H1 (cell line): ENCODE measurements at regions of chr6 and their contacts with region 1.

Region 1: DNA sequence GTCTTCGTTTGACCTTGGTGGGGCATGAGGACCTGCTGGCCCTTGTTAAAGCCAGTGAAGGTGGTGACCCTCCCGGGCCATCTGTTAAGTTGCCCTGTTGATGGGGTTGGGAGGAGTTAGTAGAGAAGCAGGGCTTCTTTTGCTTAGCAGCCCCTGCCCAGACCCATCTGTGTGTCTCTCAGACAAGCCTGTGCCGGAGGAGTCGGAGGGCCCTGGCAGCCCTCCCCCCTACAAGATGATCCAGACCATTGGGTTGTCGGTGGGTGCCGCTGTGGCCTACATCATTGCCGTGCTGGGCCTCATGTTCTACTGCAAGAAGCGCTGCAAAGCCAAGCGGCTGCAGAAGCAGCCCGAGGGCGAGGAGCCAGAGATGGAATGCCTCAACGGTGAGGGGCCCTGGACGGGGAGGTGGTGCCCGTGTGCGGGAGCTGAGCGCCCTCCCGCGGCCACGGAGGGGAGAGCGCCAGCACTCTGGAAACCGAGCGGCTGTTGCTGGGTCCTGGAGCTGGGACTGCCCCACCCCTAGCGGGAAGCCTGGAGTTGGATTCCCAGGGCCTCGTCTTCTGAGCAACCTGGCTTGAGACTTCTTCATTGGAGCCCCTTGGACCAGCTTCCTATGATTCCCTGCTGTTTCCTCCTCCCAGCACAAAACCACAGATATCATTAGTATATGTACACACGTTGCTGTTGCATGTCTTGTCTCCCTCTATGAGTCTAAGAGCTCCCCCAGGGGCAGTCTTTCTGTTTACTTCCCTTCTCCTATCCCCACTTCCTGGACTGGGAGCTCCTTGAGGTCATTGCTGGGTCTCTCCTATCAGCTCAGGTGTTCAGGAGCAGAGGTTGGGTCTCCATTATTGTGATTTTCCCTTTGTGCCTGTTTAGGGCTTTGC is 27.6 kb upstream of the SRF start:
- DNase-seq: peak; percentile 89 to 96
- H3K4me3 ChIP-seq: no peak overlapping the region; a peak in 1 of 8 replicates
- H3K27ac ChIP-seq: no peak overlapping the region
- H3K4me1 ChIP-seq: peaks cover 0 to 6% (median 3%) of the 10 kb centered on the region in 4 experiments; a peak in 3 of 7 replicates
- H3K27me3 ChIP-seq: no peaks in the 10 kb centered on the region
- CTCF ChIP-seq: peak; percentile 92 to 99 (median 98)
- EP300 ChIP-seq: no peak; a peak in 1 of 3 replicates
- POLR2A ChIP-seq: 0 out of 3 replicates have a peak, but pooled peaks of 1 of the 2 experiments have one; percentile 36
- RAD21 ChIP-seq: peak; percentile 99 to 100

Region 2: GRCh38 chr6:42963855-42964605 is 179.4 kb before region 1 on chr6:
- CTCF ChIA-PET with region 1: interaction called, 18 read pairs
- POLR2A ChIA-PET with region 1: no interaction called
- DNase-seq: peak; percentile 64 to 82
- H3K4me3 ChIP-seq: no peak overlapping the region
- H3K27ac ChIP-seq: no peak overlapping the region
- H3K4me1 ChIP-seq: peaks cover 0 to 10% (median 6%) of the 10 kb centered on the region in 4 experiments; a peak in 5 of 7 replicates
- H3K27me3 ChIP-seq: peaks cover 0 to 13% (median 10%) of the 10 kb centered on the region in 4 experiments; a peak in 5 of 7 replicates
- CTCF ChIP-seq: peak in 2 of 3 experiments; percentile 50 to 63; a peak in 3 of 4 replicates
- EP300 ChIP-seq: no peak
- POLR2A ChIP-seq: no peak
- RAD21 ChIP-seq: peak; percentile 69 to 79

Region 3: GRCh38 chr6:43053545-43054205 is 89.8 kb before region 1 on chr6 and contains the start of gene CUL7:
- CTCF ChIA-PET with region 1: interaction called, 20 read pairs
- POLR2A ChIA-PET with region 1: interaction called, 10 read pairs
- DNase-seq: peak; percentile 73 to 88
- H3K4me3 ChIP-seq: peak within 1 kb of the TSS; percentile 72 to 91 (median 78)
- H3K27ac ChIP-seq: peak within 1 kb of the TSS; percentile 87
- H3K4me1 ChIP-seq: peaks cover 4 to 15% (median 7%) of the 10 kb centered on the region in 4 experiments; a peak in 6 of 7 replicates
- H3K27me3 ChIP-seq: no peaks in the 10 kb centered on the region
- CTCF ChIP-seq: no peak
- EP300 ChIP-seq: no peak
- POLR2A ChIP-seq: peak in 1 of 2 experiments; percentile 92; a peak in 2 of 3 replicates
- RAD21 ChIP-seq: 0 out of 4 replicates have a peak, but pooled peaks of 1 of the 2 experiments have one; percentile 0
- total RNA-seq, gene CUL7: 10.8 and 11.4 TPM in 2 replicates

Region 4: GRCh38 chr6:43070028-43070632 is 73.3 kb before region 1 on chr6:
- CTCF ChIA-PET with region 1: interaction called, 31 read pairs
- POLR2A ChIA-PET with region 1: interaction called, 30 read pairs
- DNase-seq: no peak
- H3K4me3 ChIP-seq: no peak overlapping the region
- H3K27ac ChIP-seq: no peak overlapping the region
- H3K4me1 ChIP-seq: peaks cover 0 to 8% (median 3%) of the 10 kb centered on the region in 4 experiments; a peak in 4 of 7 replicates
- H3K27me3 ChIP-seq: no peaks in the 10 kb centered on the region
- CTCF ChIP-seq: peak; percentile 25 to 73 (median 48)
- EP300 ChIP-seq: no peak
- POLR2A ChIP-seq: no peak
- RAD21 ChIP-seq: peak; percentile 81

Region 5: GRCh38 chr6:43089874-43090558 is 53.5 kb before region 1 on chr6:
- CTCF ChIA-PET with region 1: interaction called, 14 read pairs
- POLR2A ChIA-PET with region 1: interaction called, 3 read pairs
- DNase-seq: peak in 1 of 2 experiments; percentile 57
- H3K4me3 ChIP-seq: peak overlapping the region; percentile 19 to 46 (median 31); a peak in 7 of 8 replicates
- H3K27ac ChIP-seq: peak overlapping the region; percentile 81
- H3K4me1 ChIP-seq: peaks cover 18 to 33% (median 26%) of the 10 kb centered on the region in 4 experiments
- H3K27me3 ChIP-seq: no peaks in the 10 kb centered on the region
- CTCF ChIP-seq: no peak
- EP300 ChIP-seq: no peak
- POLR2A ChIP-seq: no peak
- RAD21 ChIP-seq: no peak

Region 6: DNA sequence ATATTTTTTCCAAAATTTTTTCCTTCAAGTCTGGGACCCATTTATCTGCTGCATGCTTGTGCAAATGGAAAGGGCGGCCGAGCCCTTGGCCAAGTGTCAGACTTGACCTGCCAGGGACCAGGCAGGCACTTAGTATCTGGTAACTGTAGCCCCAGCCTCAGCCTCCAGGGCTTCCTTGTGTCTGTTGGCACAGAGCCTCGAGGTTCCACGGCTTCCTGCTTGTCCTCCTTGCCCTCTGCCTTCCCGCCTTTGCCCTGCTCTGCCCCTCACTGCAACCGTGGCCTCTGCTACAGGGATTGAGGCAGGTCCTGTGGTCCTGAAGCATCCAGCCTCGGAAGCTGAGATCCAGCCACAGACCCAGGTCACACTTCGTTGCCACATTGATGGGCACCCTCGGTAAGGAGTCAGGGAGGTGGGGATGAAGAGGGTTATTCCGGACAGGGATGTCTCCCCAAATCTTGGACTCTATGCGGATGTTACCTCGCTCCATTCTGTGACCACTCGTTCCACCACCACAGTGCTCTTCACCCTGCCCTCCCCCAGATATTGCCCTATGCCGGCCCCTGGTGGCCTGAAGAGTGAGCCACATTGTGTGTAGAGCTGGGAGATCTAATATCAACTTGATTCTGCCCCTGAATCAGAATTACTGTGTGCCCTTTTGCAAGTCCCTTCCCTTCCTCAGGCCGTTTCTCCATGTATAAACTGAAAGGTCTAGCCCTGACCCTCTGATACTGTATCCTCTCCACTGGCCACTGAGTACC is 13.9 kb before region 1 on chr6:
- CTCF ChIA-PET with region 1: interaction called, 27 read pairs
- POLR2A ChIA-PET with region 1: interaction called, 7 read pairs
- DNase-seq: peak in 1 of 2 experiments; percentile 63
- H3K4me3 ChIP-seq: no peak overlapping the region
- H3K27ac ChIP-seq: no peak overlapping the region
- H3K4me1 ChIP-seq: peaks cover 0 to 14% (median 5%) of the 10 kb centered on the region in 4 experiments
- H3K27me3 ChIP-seq: no peaks in the 10 kb centered on the region
- CTCF ChIP-seq: peak; percentile 72 to 82 (median 80)
- EP300 ChIP-seq: no peak
- POLR2A ChIP-seq: no peak
- RAD21 ChIP-seq: peak; percentile 91 to 92